Adrenal gland (tissue), 19 donors: ENCODE measurements at regions of chr20 and their contacts with region 1.

Region 1: GRCh38 chr20:48246497-48247350 is 461.4 kb upstream of the SULF2 start:
- DNase-seq: no peak
- H3K4me3 ChIP-seq: no peak overlapping the region
- H3K27ac ChIP-seq: no peak overlapping the region
- H3K4me1 ChIP-seq: peaks cover 0 to 4% of the 10 kb centered on the region in 2 donors
- H3K27me3 ChIP-seq: no peaks in the 10 kb centered on the region
- CTCF ChIP-seq: no peak
- POLR2A ChIP-seq: no peak

Region 2: DNA sequence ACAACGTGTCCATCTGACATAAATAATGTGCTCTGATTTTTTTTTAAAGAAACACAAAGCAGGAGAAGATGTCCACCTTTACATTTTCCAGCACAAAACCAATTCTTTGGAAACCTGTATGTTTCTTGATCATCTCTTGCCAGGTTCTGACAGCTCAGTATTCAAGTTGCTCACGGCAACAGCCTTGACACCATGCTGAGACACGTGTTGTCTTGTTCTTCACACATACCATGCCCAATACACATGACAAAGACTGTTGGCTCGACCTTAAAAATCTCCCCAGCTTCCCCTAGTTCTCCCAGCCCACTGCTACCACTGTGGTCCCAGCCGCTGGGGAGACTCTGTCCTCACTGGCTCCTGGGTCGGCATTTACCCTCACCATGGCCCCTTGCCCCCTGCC is 62.2 kb after region 1 on chr20:
- intact Hi-C with region 1: loop called in 1 of 2 experiments (anchors 10 kb)
- DNase-seq: no peak
- H3K4me3 ChIP-seq: no peak overlapping the region
- H3K27ac ChIP-seq: no peak overlapping the region
- H3K4me1 ChIP-seq: peaks cover 0 to 4% of the 10 kb centered on the region in 2 donors
- H3K27me3 ChIP-seq: no peaks in the 10 kb centered on the region
- CTCF ChIP-seq: no peak
- POLR2A ChIP-seq: no peak